IMR-90 (cell line): ENCODE measurements at regions of chr12 and their contacts with region 1.

Region 1: DNA sequence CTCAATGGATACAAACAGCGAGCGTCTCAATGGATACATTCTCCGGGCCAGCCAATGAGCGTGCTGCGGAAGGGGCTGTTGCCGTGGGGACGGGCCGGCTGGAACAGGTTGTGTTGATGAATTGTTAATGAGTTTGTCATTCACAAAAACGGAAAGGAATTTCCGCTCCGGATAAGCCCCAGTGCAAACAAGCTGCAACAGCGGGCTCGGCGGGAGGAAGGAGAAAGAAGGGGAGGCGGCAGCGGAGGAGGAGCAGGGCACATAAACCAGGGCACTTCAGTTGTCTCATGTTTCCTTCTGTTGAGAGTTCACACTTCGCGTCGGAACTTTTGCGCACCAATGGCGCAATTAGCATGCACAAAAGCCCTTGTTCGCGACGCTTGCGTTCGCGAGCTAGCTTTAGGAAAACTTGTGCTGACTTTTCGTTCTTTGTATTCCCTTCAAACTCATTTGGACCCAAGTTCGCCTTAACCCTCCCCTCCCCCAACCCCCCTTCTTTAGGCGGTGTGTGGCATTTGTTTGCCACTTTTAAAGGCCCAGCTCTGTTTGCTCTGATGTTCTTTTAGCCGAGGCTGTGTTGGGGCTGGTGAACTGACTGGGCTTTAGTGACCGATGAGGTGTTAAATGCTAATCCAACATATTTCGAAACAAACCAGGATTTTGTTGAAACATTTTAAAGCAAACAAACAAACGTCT is at the start of gene DUSP6:
- DNase-seq: peak; percentile 99
- ATAC-seq: peak; percentile 73
- H3K4me3 ChIP-seq: peak within 1 kb of the TSS; percentile 91
- H3K27ac ChIP-seq: peak within 1 kb of the TSS; percentile 90
- H3K4me1 ChIP-seq: peaks cover 8% of the 10 kb centered on the region; the same call in 1 of the 2 replicates
- H3K27me3 ChIP-seq: no peaks in the 10 kb centered on the region
- CTCF ChIP-seq: no peak
- POLR2A ChIP-seq: no peak
- RAD21 ChIP-seq: no peak
- total RNA-seq, gene DUSP6: 70.1 and 78.6 TPM in 2 replicates

Region 2: GRCh38 chr12:89051065-89051677 is 301.5 kb before region 1 on chr12:
- CTCF ChIA-PET with region 1: no interaction called
- POLR2A ChIA-PET with region 1: no interaction called
- dilution Hi-C with region 1: no loop called
- in situ Hi-C with region 1: no loop called
- intact Hi-C with region 1: loop called (anchors 1 kb)
- DNase-seq: peak; percentile 78
- ATAC-seq: peak; percentile 63
- H3K4me3 ChIP-seq: no peak overlapping the region
- H3K27ac ChIP-seq: no peak overlapping the region
- H3K4me1 ChIP-seq: no peaks in the 10 kb centered on the region
- H3K27me3 ChIP-seq: no peaks in the 10 kb centered on the region
- CTCF ChIP-seq: peak; percentile 88
- POLR2A ChIP-seq: no peak
- RAD21 ChIP-seq: peak; percentile 90

Region 3: GRCh38 chr12:89162704-89163261 is 189.9 kb before region 1 on chr12:
- CTCF ChIA-PET with region 1: interaction called, 3 read pairs
- POLR2A ChIA-PET with region 1: no interaction called
- dilution Hi-C with region 1: no loop called
- in situ Hi-C with region 1: no loop called
- intact Hi-C with region 1: loop called (anchors 1 kb)
- DNase-seq: peak; percentile 99
- ATAC-seq: peak; percentile 90
- H3K4me3 ChIP-seq: no peak overlapping the region
- H3K27ac ChIP-seq: peak overlapping the region; percentile 86; the same call in 1 of the 2 replicates
- H3K4me1 ChIP-seq: peaks cover 6% of the 10 kb centered on the region
- H3K27me3 ChIP-seq: no peaks in the 10 kb centered on the region
- CTCF ChIP-seq: no peak
- POLR2A ChIP-seq: no peak
- RAD21 ChIP-seq: no peak; the same call in 1 of the 2 replicates

Region 4: GRCh38 chr12:89319122-89319521 is 33.5 kb before region 1 on chr12:
- CTCF ChIA-PET with region 1: no interaction called
- POLR2A ChIA-PET with region 1: no interaction called
- dilution Hi-C with region 1: no loop called
- in situ Hi-C with region 1: no loop called
- intact Hi-C with region 1: no loop called
- DNase-seq: no peak
- ATAC-seq: peak; percentile 27; the same call in 1 of the 2 replicates
- H3K4me3 ChIP-seq: no peak overlapping the region
- H3K27ac ChIP-seq: no peak overlapping the region
- H3K4me1 ChIP-seq: 0 out of 2 replicates have a peak, but pooled peaks cover 1% of the 10 kb centered on the region
- H3K27me3 ChIP-seq: no peaks in the 10 kb centered on the region
- CTCF ChIP-seq: no peak
- POLR2A ChIP-seq: no peak
- RAD21 ChIP-seq: no peak

Region 5: GRCh38 chr12:89417246-89417977 is 64.8 kb after region 1 on chr12:
- CTCF ChIA-PET with region 1: no interaction called
- POLR2A ChIA-PET with region 1: no interaction called
- dilution Hi-C with region 1: no loop called
- in situ Hi-C with region 1: no loop called
- intact Hi-C with region 1: loop called (anchors 2 kb)
- DNase-seq: peak; percentile 64
- ATAC-seq: peak; percentile 73
- H3K4me3 ChIP-seq: no peak overlapping the region
- H3K27ac ChIP-seq: peak overlapping the region; percentile 72
- H3K4me1 ChIP-seq: peaks cover 18% of the 10 kb centered on the region
- H3K27me3 ChIP-seq: no peaks in the 10 kb centered on the region
- CTCF ChIP-seq: no peak
- POLR2A ChIP-seq: no peak
- RAD21 ChIP-seq: no peak

Region 6: DNA sequence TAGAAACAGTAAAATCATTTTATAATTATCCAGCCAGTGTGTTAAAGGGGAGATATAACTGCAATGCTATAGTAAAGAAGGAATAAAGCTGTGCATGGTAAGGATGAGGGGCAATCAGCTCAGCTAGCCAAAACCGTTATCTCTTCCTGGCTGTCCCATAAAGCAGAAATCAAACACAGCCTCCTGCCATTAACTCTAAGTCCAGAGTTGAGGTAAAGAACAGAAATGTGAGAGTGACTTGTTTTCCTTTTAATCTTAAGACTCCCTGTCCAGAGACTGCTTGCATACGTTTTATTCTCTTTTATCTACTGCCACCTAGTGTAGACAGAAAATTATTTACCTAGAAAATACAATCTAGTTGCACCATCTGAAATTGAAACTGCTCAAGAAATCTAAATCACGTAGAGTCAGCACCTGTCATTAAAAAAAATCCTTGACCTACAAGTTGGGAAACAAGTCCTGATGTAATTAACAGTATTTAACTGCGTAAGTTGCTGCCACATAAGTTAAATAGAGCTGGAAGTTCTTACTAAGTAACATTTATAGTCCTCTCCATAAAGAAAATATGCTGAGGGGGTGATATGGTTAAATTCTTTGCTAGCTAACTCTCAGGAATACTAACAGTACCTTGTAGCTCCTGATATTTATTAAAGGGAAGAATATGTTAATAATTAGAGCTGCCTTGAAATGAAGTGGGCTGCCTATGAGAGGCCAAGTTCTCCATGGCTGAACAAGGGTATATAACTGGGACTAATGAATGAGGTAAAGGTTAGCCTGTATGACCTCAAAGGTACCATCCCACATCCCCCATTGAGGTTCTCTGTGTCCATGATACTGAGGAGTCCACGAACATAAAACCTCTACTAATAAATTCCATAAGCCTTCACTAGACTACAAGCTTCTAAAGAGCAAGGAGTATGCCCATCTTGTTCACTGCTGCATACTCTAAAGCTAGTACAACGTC is 109.3 kb after region 1 on chr12:
- CTCF ChIA-PET with region 1: interaction called, 12 read pairs
- POLR2A ChIA-PET with region 1: interaction called, 10 read pairs
- dilution Hi-C with region 1: no loop called
- in situ Hi-C with region 1: no loop called
- intact Hi-C with region 1: loop called (anchors 1 kb)
- DNase-seq: peak; percentile 82
- ATAC-seq: peak; percentile 87
- H3K4me3 ChIP-seq: peak overlapping the region; percentile 20; the same call in 1 of the 2 replicates
- H3K27ac ChIP-seq: peak overlapping the region; percentile 69; the same call in 1 of the 2 replicates
- H3K4me1 ChIP-seq: peaks cover 6% of the 10 kb centered on the region
- H3K27me3 ChIP-seq: no peaks in the 10 kb centered on the region
- CTCF ChIP-seq: peak; percentile 75
- POLR2A ChIP-seq: peak; percentile 41; the same call in 1 of the 2 replicates
- RAD21 ChIP-seq: peak; percentile 90